Psoas muscle (tissue), 8 donors: ENCODE measurements at regions of chr10 and their contacts with region 1.

Region 1: DNA sequence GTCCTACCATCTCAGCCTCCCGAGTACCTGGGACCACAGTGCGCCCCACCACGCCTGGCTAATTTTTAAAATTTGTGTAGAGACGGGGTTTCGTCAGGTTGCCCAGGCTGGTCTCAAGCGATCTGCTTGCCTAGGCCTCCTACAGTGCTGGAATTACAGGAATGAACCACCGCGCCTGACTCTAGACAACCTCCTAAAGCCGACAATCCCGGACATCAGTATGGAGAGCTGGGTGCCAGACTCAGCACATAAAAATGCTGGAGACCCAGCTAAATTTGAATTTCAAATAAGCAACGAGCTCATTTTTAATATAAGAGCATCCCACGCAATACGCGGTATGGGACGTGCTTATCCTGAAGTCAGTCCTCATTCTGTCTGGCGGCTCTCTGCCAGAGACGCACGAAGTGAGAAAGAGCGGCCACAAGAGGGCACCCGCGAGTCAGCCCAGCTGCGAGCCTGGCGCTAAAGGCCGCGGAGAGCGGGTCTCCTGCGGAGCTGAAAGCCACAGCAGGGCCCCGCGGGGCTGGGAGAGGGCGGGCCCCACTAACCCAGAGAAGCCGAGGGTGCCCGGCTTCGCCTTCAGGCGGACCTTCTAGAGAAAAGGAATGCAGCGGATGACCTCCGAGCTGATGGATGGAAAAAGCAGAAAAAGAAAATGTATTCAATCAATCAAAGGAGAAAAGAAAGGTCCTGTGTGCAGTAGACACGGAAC is 7.0 kb downstream of the CALY start:
- DNase-seq: peak; percentile 83 to 91
- ATAC-seq: peak; percentile 84 to 97 (median 88)
- H3K4me3 ChIP-seq: peak overlapping the region; percentile 43
- H3K27ac ChIP-seq: no peak overlapping the region
- H3K4me1 ChIP-seq: no peaks in the 10 kb centered on the region
- H3K27me3 ChIP-seq: peaks cover 0 to 74% (median 33%) of the 10 kb centered on the region in 3 donors
- CTCF ChIP-seq: peak; percentile 98

Region 2: GRCh38 chr10:132867801-132868644 is 461.6 kb before region 1 on chr10:
- intact Hi-C with region 1: no loop called
- DNase-seq: peak in 1 of 2 donors; percentile 42
- ATAC-seq: no peak
- H3K4me3 ChIP-seq: no peak overlapping the region
- H3K27ac ChIP-seq: no peak overlapping the region
- H3K4me1 ChIP-seq: no peaks in the 10 kb centered on the region
- H3K27me3 ChIP-seq: peaks cover 0 to 43% (median 11%) of the 10 kb centered on the region in 3 donors
- CTCF ChIP-seq: no peak

Region 3: DNA sequence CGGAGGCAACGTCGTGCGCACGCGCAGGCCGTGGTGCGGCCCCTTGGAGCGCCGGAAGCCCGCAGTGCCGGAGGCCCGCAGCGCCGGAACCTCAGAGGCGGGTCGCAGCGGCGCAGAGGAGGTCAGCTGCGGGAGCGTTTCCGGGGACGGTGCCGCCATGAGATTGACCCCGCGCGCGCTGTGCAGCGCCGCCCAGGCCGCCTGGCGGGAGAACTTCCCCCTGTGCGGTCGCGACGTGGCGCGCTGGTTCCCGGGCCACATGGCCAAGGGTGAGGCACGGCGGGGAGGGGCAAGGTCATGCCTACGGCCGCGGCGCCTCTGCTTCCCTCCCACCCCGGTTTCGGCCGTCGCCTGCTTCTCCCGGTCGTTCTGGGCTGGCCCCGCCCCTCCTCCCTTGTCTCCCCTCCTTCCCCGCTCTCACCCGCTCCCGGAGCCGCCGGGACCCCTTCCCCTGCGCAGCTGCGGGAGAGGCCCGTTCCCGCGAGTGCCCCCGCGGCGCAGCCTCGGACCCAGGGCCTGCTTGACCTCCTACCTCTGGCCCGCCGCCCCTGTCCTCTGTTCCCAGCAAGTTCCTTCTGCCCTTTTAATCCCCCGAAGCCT is 64.5 kb after region 1 on chr10 and contains the start of gene MTG1:
- intact Hi-C with region 1: loop called in 1 of 2 experiments (anchors 10 kb)
- DNase-seq: peak; percentile 96 to 98
- ATAC-seq: peak; percentile 97 to 98 (median 98)
- H3K4me3 ChIP-seq: peak within 1 kb of the TSS; percentile 78
- H3K27ac ChIP-seq: peak within 1 kb of the TSS; percentile 89
- H3K4me1 ChIP-seq: peaks cover 8% of the 10 kb centered on the region
- H3K27me3 ChIP-seq: no peaks in the 10 kb centered on the region
- CTCF ChIP-seq: peak; percentile 21
- total RNA-seq, gene MTG1: 22.7 to 37.7 (median 26.5) TPM

Region 4: DNA sequence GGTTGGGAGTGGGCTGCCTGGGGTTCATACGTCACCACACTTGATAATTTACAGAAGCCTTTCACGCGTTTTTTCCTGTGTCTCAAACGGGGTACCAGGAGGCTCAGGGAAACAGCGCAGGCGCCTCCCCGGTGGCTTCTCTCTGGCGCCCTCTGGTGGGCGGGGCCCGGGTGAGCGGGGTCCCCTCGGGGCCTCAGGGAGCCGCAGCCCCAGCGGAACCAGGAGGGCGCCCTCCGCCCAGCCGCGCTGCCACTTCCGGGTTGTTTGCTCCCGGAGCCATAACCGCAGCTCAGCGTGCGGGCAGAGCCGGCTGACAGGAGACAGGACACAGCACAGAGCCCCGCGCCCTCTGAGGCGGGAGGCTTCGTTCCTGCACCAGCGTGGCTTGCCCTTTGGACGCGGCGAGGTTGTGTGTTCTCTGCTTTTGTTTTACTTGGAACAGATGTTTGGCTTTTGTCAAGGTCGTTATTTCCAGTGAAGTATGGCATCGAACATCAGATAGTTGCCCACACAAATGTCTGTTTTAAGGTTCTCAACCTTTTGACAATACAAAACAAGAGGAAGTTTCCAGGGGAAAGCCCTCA is 190.6 kb after region 1 on chr10:
- intact Hi-C with region 1: loop called in 1 of 2 experiments (anchors 2 kb)
- DNase-seq: peak; percentile 80 to 88
- ATAC-seq: peak; percentile 86 to 100 (median 96)
- H3K4me3 ChIP-seq: peak overlapping the region; percentile 65
- H3K27ac ChIP-seq: no peak overlapping the region
- H3K4me1 ChIP-seq: no peaks in the 10 kb centered on the region
- H3K27me3 ChIP-seq: no peaks in the 10 kb centered on the region
- CTCF ChIP-seq: peak; percentile 89

Region 5: DNA sequence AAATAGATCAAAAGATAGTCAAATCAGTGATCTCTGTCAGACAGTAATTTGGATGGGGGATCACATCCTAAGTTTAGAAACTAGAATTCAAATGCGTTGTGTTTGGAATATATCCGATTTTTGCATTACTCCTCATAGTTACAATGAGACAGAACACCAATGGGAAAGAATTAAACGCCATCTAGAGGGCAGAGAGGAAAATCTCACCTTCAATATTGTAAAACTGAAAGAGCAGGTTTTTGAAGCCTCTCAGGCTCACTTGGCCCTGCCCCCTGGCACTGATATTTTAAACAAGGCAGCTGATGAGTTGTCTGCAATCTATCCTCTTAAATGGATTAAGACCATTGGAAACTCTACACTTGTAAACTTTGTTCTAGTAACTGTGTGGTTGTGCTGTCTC is 279.2 kb after region 1 on chr10:
- intact Hi-C with region 1: loop called in 1 of 2 experiments (anchors 5 kb)
- DNase-seq: no peak
- ATAC-seq: no peak
- H3K4me3 ChIP-seq: no peak overlapping the region
- H3K27ac ChIP-seq: no peak overlapping the region
- H3K4me1 ChIP-seq: no peaks in the 10 kb centered on the region
- H3K27me3 ChIP-seq: peaks cover 2 to 17% (median 4%) of the 10 kb centered on the region in 3 donors
- CTCF ChIP-seq: peak; percentile 37